ENCODE measurements at regions of chr3 and their contacts with region 1.

Region 1: DNA sequence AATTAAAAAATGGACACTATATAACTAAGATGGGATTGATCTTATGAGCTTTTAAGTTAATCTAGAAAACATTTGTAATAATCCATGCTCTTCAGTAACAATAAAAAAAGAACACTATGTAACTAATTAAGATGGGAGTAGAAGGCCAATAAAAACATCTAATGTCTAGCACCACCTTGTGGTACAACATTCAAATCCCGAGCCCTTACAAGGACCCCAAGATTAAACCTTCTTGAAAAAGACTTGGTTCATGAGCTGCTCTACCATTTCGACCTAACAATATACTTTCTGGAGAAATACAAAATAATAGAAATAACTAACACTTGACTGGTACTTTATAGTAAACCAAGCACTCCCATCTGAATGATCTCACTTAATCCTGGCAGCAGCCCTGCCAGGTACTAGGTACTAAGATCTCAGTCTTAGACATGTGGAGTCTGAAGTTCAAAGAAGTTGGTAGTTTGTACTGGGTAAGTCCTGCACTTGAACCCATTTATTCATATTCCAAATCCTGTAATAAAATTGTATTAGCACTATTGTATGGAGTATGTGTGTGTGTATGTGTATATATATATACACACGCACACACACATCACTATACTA is 21.8 kb downstream of the METTL6 start:
- DNase-seq: peak in 3 of 9 experiments; percentile 22 to 77 (median 69)
- ATAC-seq: peak; percentile 73
- H3K4me3 ChIP-seq: no peak overlapping the region
- H3K4me3 Mint-ChIP-seq: no peak overlapping the region
- H3K27ac ChIP-seq: no peak overlapping the region
- H3K27ac Mint-ChIP-seq: no peak overlapping the region
- H3K4me1 ChIP-seq: no peaks in the 10 kb centered on the region
- H3K4me1 Mint-ChIP-seq: peaks cover 4% of the 10 kb centered on the region
- H3K27me3 ChIP-seq: no peaks in the 10 kb centered on the region
- H3K27me3 Mint-ChIP-seq: no peaks in the 10 kb centered on the region
- CTCF ChIP-seq: peak; percentile 61

Region 2: GRCh38 chr3:14806641-14807263 is 598.8 kb before region 1 on chr3:
- CTCF ChIA-PET with region 1: no interaction called
- POLR2A ChIA-PET with region 1: no interaction called
- intact Hi-C with region 1: no loop called
- DNase-seq: peak in 1 of 9 experiments; percentile 8
- ATAC-seq: no peak
- H3K4me3 ChIP-seq: no peak overlapping the region
- H3K4me3 Mint-ChIP-seq: no peak overlapping the region
- H3K27ac ChIP-seq: no peak overlapping the region
- H3K27ac Mint-ChIP-seq: no peak overlapping the region
- H3K4me1 ChIP-seq: no peaks in the 10 kb centered on the region
- H3K4me1 Mint-ChIP-seq: peaks cover 2% of the 10 kb centered on the region
- H3K27me3 ChIP-seq: no peaks in the 10 kb centered on the region
- H3K27me3 Mint-ChIP-seq: peaks cover 34% of the 10 kb centered on the region
- CTCF ChIP-seq: no peak

Region 3: DNA sequence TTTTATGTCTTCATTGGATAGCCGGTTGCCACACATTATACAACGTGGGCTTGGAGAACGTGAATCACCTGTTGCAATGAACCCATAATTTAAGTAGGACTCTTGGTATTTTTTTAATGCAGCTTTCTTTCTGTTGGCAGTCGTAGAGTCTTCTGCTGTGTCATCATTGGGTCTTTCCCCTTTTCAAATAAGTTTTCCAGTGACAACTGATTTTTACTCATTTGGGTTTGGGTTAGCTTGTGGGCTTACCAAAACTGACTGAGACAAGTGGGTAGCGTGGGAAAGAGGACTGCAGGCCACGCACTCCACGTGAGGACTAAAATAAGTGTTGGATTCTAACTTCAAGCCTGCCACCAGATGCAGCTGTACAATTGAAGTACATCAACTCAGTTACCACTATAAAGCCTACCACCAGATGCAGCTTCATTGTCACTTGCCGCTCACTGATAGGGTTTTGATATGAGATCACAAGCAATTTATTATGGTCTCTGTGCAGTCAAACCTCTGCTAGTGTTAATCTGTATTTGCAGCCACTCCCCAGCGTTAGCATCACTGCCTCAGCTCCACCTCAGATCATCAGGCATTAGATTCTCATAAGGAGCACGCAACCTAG is 205.9 kb before region 1 on chr3:
- CTCF ChIA-PET with region 1: interaction called, 69 read pairs
- POLR2A ChIA-PET with region 1: no interaction called
- intact Hi-C with region 1: loop called (anchors 1 kb)
- DNase-seq: no peak
- ATAC-seq: no peak
- H3K4me3 ChIP-seq: no peak overlapping the region
- H3K4me3 Mint-ChIP-seq: no peak overlapping the region
- H3K27ac ChIP-seq: no peak overlapping the region
- H3K27ac Mint-ChIP-seq: no peak overlapping the region
- H3K4me1 ChIP-seq: no peaks in the 10 kb centered on the region
- H3K4me1 Mint-ChIP-seq: peaks cover 4% of the 10 kb centered on the region
- H3K27me3 ChIP-seq: no peaks in the 10 kb centered on the region
- H3K27me3 Mint-ChIP-seq: no peaks in the 10 kb centered on the region
- CTCF ChIP-seq: no peak

Region 4: DNA sequence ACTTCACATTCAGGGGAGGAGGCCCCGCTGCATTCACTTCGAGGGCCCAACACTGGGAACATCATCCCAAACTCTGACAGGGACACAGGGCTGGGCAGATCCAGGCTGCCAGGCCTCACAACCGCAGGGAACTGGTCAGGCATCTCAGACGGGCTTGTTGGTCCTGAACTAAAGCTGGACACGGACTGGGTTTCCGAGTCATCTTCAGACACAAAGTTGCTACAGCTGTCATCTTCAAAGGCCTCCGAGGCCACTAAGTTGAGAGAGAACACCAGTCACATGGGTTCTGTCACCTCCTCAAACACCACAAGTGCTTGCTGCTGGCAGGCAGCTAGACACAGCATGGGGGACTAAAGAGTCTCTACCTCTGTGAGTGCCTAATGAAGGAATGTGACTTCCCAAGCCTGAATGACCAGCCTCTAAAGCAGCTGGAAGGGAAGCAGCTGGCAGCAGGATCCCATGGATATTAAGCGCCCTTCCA is 148.6 kb before region 1 on chr3:
- CTCF ChIA-PET with region 1: interaction called, 11 read pairs
- POLR2A ChIA-PET with region 1: no interaction called
- intact Hi-C with region 1: no loop called
- DNase-seq: no peak
- ATAC-seq: no peak
- H3K4me3 ChIP-seq: no peak overlapping the region
- H3K4me3 Mint-ChIP-seq: no peak overlapping the region
- H3K27ac ChIP-seq: no peak overlapping the region
- H3K27ac Mint-ChIP-seq: peak overlapping the region; percentile 69
- H3K4me1 ChIP-seq: no peaks in the 10 kb centered on the region
- H3K4me1 Mint-ChIP-seq: peaks cover 1% of the 10 kb centered on the region
- H3K27me3 ChIP-seq: no peaks in the 10 kb centered on the region
- H3K27me3 Mint-ChIP-seq: no peaks in the 10 kb centered on the region
- CTCF ChIP-seq: no peak

Region 5: GRCh38 chr3:15385901-15386653 is 19.5 kb before region 1 on chr3:
- CTCF ChIA-PET with region 1: no interaction called
- POLR2A ChIA-PET with region 1: no interaction called
- intact Hi-C with region 1: no loop called
- DNase-seq: no peak
- ATAC-seq: no peak
- H3K4me3 ChIP-seq: no peak overlapping the region
- H3K4me3 Mint-ChIP-seq: no peak overlapping the region
- H3K27ac ChIP-seq: no peak overlapping the region
- H3K27ac Mint-ChIP-seq: no peak overlapping the region
- H3K4me1 ChIP-seq: no peaks in the 10 kb centered on the region
- H3K4me1 Mint-ChIP-seq: no peaks in the 10 kb centered on the region
- H3K27me3 ChIP-seq: no peaks in the 10 kb centered on the region
- H3K27me3 Mint-ChIP-seq: no peaks in the 10 kb centered on the region
- CTCF ChIP-seq: no peak